WTC11 (cell line): ENCODE measurements at regions of chr16 and their contacts with region 1.

Region 1: GRCh38 chr16:74774203-74775116 is at the start of gene FA2H:
- DNase-seq: peak; percentile 88
- ATAC-seq: peak; percentile 94
- H3K4me3 Mint-ChIP-seq: peak within 1 kb of the TSS; percentile 84
- H3K27ac Mint-ChIP-seq: peak within 1 kb of the TSS; percentile 80; the same call in 1 of the 2 replicates
- H3K4me1 Mint-ChIP-seq: peaks cover 16% of the 10 kb centered on the region
- H3K27me3 Mint-ChIP-seq: peaks cover 31% of the 10 kb centered on the region
- CTCF ChIP-seq: no peak
- total RNA-seq, gene FA2H: 6.0 to 10.9 TPM (median 6.6 TPM) in 3 replicates

Region 2: DNA sequence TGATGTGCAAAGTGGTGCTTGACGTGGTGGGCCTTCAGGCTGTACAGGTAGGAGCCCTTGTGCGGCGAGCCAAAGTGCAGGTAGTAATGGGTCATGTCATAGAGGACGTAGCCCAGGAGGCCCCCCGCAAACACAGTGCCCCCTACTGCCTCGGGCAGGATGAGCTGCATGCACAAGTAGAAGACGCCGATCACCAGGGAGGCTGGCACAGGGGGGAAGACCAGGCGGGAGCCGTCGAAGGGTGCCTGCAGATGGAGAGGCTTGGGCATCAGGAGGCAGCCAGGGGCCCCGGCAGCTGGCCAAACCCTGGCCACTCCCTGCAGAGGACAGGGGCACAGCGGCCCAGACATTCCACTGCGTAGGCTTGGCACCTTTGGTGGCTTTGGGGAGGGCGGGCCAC is 58.1 kb before region 1 on chr16:
- CTCF ChIA-PET with region 1: interaction called, 12 read pairs
- POLR2A ChIA-PET with region 1: no interaction called
- DNase-seq: peak; percentile 44
- ATAC-seq: peak; percentile 47
- H3K4me3 Mint-ChIP-seq: no peak overlapping the region
- H3K27ac Mint-ChIP-seq: no peak overlapping the region
- H3K4me1 Mint-ChIP-seq: no peaks in the 10 kb centered on the region
- H3K27me3 Mint-ChIP-seq: no peaks in the 10 kb centered on the region
- CTCF ChIP-seq: no peak

Region 3: GRCh38 chr16:74738134-74738541 is 36.3 kb before region 1 on chr16:
- CTCF ChIA-PET with region 1: interaction called, 12 read pairs
- POLR2A ChIA-PET with region 1: no interaction called
- DNase-seq: no peak
- ATAC-seq: no peak
- H3K4me3 Mint-ChIP-seq: no peak overlapping the region
- H3K27ac Mint-ChIP-seq: no peak overlapping the region
- H3K4me1 Mint-ChIP-seq: peaks cover 49% of the 10 kb centered on the region
- H3K27me3 Mint-ChIP-seq: no peaks in the 10 kb centered on the region
- CTCF ChIP-seq: no peak

Region 4: DNA sequence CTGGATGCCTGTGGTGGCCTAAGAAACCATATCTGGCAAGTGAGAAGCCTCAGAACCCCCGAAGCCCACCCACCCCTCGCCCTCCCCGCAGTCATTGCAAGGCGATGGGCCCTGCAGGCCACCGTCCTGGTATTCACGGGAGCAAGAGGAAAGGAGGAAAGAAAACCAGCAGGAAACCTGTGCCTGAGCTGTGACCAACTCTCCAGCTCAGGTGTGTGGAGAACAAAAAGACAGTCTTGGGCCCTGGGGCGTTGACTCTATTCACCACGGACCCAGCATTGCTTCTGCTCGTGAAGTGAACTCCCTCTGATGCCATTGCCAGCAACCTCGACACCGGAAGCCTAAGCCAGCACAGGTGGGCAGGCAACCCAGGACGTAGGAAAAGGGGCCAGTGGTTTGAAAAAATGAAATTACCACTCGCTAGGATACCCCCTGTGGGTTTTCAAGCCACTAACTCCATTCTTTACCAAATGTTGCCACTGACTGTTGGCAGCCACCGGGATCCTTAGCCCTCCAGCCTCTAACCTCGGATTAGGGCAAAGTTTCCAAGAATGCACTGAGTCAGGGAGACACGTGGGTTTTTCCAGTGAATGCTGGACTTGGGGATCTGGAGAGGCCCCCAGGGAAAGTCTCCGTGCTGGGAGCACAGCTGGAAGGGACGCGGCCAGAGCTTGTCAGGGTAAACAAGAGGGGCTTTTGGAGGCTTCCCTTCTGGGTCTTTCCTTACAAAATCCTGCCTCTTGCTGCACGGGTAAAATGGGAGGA is 25.0 kb before region 1 on chr16:
- CTCF ChIA-PET with region 1: interaction called, 16 read pairs
- POLR2A ChIA-PET with region 1: no interaction called
- DNase-seq: no peak
- ATAC-seq: peak; percentile 67
- H3K4me3 Mint-ChIP-seq: no peak overlapping the region
- H3K27ac Mint-ChIP-seq: no peak overlapping the region
- H3K4me1 Mint-ChIP-seq: peaks cover 22% of the 10 kb centered on the region
- H3K27me3 Mint-ChIP-seq: no peaks in the 10 kb centered on the region
- CTCF ChIP-seq: no peak

Region 5: DNA sequence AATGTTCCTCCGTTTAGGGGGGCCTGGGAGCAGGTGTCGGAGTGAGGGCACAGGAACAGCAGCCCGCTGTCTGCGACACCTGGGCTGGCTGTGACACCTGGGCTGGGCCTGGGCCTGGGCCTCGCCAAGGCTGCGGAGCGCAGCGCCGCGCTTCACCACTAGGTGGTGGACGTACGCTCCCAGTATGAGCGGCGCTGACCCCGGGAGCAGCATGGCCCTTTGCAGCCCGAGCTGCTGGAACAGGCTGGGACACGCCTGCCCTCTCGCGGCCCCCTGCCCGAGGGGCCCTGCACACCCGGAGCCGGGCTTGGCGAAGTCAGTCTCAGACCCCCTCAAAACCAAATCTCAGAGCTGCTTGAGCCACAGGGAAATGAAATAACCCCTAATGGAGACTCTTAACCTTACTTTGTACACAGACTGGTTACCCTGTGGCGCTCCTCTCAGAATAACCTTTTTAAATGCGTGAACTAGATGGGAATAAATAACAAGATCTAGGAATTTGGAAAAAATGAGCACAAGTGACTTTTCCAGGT is 38.7 kb after region 1 on chr16:
- CTCF ChIA-PET with region 1: interaction called, 36 read pairs
- POLR2A ChIA-PET with region 1: interaction called, 4 read pairs
- DNase-seq: peak; percentile 96
- ATAC-seq: peak; percentile 98
- H3K4me3 Mint-ChIP-seq: no peak overlapping the region
- H3K27ac Mint-ChIP-seq: no peak overlapping the region
- H3K4me1 Mint-ChIP-seq: peaks cover 36% of the 10 kb centered on the region
- H3K27me3 Mint-ChIP-seq: peaks cover 32% of the 10 kb centered on the region
- CTCF ChIP-seq: peak; percentile 91